ENCODE measurements at regions of chr12 and their contacts with region 1.

Region 1: DNA sequence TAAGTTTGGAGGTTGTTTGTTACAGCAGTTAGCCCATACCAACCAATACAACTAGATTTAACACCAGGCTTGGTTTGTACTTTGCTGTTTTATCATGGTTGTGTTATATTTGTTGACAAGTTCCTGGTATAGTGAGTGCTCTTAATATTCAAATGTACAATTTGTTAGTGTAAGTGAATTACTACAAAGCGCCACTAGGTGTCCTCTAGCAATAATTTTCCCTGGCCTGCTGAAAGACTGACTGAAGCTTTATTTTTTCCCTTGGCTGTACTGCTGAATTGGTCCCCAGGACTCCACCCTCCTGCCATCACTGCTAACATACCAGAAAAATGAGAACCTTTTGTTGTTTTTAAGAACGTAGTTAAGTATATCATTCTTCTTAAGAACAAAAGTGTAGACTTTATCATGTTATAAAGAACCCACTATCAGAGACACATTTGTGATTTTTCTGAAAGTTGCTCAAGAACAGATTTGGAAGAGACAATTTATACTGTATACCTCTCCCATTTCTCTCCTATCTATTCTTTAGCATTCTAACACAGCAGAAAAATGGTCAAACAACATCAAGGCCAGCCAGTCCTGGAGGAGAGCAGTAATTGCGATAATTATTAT is 75.3 kb upstream of the FAR2 start:
- DNase-seq: peak; percentile 67
- H3K4me3 ChIP-seq: no peak overlapping the region
- H3K27ac ChIP-seq: no peak overlapping the region
- H3K4me1 ChIP-seq: no peaks in the 10 kb centered on the region
- H3K27me3 ChIP-seq: peaks cover 2 to 12% of the 10 kb centered on the region in 2 experiments
- CTCF ChIP-seq: peak; percentile 51 to 55
- POLR2A ChIP-seq: no peak

Region 2: DNA sequence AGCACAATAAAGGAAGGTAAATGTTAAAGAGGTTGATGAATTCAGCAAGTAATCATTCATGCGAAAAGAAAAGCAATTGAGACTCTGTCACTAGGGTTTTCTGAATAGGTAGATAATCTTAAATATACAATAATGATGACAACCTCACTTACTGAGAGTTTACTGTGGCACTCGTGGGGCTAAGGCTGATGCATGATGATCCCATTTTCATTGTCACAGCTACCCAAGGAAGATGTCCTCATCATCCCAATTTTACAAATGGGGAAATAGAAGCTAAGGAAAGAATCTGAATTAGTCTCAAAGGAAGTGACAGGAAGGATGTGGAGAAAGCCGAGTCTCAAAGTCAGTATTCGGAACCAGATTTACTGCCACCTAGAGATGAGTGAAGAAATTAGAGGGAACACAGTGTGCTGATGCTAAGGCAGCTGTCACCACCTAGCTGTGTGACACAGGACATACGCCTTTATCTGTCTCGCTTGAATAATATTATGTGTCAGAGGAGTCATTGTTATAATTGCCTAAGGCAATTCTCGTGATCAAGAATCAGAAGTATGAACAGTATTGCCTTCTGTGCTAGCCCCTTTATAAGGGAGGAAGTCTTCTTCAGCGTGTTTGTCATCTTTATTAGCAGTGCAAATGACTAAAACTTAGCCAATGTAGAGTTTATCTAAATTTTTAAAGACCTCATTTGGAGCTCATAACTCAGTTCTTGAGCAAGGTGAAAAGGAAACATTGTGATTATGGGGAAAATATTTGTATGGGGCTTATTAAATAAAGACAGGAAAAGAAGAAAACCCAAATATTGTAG is 244.0 kb after region 1 on chr12:
- CTCF ChIA-PET with region 1: interaction called, 35 read pairs
- POLR2A ChIA-PET with region 1: no interaction called
- dilution Hi-C with region 1: no loop called
- intact Hi-C with region 1: loop called (anchors 1 kb)
- DNase-seq: peak; percentile 72
- H3K4me3 ChIP-seq: no peak overlapping the region
- H3K27ac ChIP-seq: no peak overlapping the region
- H3K4me1 ChIP-seq: peaks cover 17% of the 10 kb centered on the region
- H3K27me3 ChIP-seq: no peaks in the 10 kb centered on the region
- CTCF ChIP-seq: peak; percentile 61 to 66
- POLR2A ChIP-seq: no peak

Region 3: DNA sequence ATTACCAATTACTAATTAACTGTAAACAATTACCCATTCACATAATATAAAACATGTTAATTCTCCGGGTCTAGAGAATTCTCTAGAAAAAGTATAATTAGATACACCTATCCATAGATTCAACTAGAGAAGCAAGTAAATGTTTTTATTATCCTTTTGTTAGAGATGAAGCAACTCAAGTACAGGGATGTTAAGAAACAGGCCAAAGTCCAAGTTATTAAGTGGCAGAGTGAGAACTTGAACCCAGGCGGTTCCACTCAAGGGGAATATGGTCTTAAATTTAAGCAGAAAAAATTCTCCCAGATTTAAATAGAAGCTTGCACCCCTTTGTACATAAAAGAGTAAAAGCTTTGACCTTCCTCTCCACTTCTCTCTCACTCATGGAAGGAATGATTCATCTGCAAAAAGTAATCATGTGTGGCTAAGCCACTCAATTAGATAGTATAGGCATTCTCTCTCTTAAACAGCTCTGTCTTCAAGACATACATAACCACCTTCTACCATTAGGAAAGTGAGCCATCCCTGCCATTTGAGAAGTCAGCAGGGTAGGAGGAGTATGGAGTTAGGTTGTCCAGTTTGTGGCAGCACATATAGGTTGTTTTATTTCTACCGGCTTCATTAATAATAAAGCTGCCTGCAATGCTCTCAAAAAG is 273.2 kb after region 1 on chr12:
- CTCF ChIA-PET with region 1: interaction called, 10 read pairs
- POLR2A ChIA-PET with region 1: no interaction called
- dilution Hi-C with region 1: no loop called
- intact Hi-C with region 1: no loop called
- DNase-seq: no peak
- H3K4me3 ChIP-seq: no peak overlapping the region
- H3K27ac ChIP-seq: no peak overlapping the region
- H3K4me1 ChIP-seq: no peaks in the 10 kb centered on the region
- H3K27me3 ChIP-seq: no peaks in the 10 kb centered on the region
- CTCF ChIP-seq: no peak
- POLR2A ChIP-seq: no peak

Region 4: DNA sequence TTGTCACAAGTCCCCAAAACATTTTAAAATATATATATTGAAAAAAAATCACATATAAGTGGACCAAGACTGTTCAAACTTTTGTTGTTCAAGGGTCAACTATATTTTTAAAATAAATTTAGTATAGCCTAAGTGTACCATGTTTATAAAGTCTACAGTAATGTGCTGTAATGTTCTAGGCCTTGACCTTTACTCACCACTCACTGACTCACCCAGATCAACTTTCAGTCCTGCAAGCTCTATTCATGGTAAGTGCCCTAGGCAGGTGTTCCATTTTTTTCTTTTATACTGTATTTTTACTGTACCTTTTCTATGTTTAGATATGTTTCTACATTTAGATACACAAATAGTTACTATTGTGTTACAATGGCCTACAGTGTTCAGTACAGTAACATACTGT is 733.4 kb after region 1 on chr12:
- CTCF ChIA-PET with region 1: no interaction called
- POLR2A ChIA-PET with region 1: no interaction called
- dilution Hi-C with region 1: no loop called
- intact Hi-C with region 1: no loop called
- DNase-seq: no peak
- H3K4me3 ChIP-seq: no peak overlapping the region
- H3K27ac ChIP-seq: no peak overlapping the region
- H3K4me1 ChIP-seq: no peaks in the 10 kb centered on the region
- H3K27me3 ChIP-seq: no peaks in the 10 kb centered on the region
- CTCF ChIP-seq: no peak
- POLR2A ChIP-seq: no peak

Measured in endothelial cell of umbilical vein (primary cell).